HEK293T (cell line): ENCODE measurements at regions of chr11 and their contacts with region 1.

Region 1: GRCh38 chr11:44911029-44911814 is 39.5 kb downstream of the TP53I11 start:
- DNase-seq: peak; percentile 80

Region 2: DNA sequence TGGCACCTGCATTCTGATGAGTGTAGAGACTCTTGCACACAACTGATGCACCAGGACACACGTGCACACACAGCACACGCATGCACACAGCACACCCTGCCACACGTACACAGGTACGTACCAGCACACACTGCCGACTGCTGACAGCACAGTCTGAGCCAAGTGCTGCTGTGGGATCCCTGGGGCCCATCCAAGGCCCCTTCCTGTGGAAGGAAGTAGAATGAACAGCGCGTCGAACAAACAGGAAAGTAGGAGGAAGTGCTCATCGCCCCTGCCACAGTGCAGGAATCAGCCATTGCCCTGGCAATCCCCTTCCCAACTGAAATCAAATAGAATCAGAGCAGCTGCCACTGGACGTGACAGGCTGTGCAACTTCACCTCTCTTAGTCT is 287.9 kb before region 1 on chr11:
- CTCF ChIA-PET with region 1: interaction called, 12 read pairs
- POLR2A ChIA-PET with region 1: no interaction called
- DNase-seq: no peak